ENCODE measurements at regions of chr6 and their contacts with region 1.

Region 1: DNA sequence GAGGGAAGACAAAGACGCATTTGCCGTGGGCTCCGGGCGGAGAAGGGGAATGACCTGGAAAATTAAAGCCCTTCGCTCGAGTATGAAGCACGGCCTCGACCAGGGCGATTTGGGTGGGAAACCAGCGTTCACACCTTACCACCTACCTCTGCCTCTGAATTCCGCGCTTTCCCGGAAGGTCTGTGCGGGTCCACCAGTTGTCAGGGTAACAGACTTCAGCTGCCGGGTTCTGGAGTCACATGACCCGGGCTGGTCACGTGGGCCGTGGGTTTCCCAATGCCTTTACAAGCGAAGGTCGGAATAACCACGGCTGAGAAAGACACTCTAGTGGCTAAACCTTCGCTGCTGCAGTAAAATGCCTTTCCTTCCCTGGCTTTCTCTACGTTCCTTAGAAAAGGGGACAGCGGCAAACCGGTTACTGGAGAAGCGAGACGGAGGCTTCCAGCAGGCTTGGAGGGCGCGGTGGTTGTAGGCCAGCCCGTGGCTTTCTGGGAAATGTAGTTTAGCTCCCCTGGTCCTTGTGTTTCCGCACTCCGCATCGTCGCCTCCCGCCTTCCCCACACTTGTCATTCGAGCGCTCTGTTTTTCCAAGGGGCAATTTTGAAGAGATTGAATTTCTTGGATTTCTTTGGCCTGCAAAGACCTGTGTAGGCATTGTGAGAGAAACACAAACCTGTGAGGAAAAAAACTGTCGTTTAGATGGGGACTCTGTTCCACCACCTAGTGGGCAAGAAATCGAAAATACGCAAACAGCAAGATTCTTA is at the start of gene CEP162:
- DNase-seq: peak; percentile 73 to 84 (median 81)
- H3K4me3 ChIP-seq: peak within 1 kb of the TSS; percentile 90 to 97 (median 95)
- H3K4me3 Mint-ChIP-seq: peak within 1 kb of the TSS; percentile 89 to 99
- H3K27ac ChIP-seq: peak within 1 kb of the TSS; percentile 45 to 89
- H3K27ac Mint-ChIP-seq: peak within 1 kb of the TSS; percentile 89 to 98 (median 94)
- H3K4me1 ChIP-seq: peaks cover 11 to 15% of the 10 kb centered on the region in 2 donors
- H3K4me1 Mint-ChIP-seq: peaks cover 31% of the 10 kb centered on the region
- H3K27me3 ChIP-seq: peaks cover 5 to 36% of the 10 kb centered on the region in 2 donors
- H3K27me3 Mint-ChIP-seq: peaks cover 14 to 16% (median 15%) of the 10 kb centered on the region in 3 donors
- CTCF ChIP-seq: peak; percentile 90
- polyA plus RNA-seq, gene CEP162: 1.5 to 2.7 (median 1.6) TPM

Region 2: DNA sequence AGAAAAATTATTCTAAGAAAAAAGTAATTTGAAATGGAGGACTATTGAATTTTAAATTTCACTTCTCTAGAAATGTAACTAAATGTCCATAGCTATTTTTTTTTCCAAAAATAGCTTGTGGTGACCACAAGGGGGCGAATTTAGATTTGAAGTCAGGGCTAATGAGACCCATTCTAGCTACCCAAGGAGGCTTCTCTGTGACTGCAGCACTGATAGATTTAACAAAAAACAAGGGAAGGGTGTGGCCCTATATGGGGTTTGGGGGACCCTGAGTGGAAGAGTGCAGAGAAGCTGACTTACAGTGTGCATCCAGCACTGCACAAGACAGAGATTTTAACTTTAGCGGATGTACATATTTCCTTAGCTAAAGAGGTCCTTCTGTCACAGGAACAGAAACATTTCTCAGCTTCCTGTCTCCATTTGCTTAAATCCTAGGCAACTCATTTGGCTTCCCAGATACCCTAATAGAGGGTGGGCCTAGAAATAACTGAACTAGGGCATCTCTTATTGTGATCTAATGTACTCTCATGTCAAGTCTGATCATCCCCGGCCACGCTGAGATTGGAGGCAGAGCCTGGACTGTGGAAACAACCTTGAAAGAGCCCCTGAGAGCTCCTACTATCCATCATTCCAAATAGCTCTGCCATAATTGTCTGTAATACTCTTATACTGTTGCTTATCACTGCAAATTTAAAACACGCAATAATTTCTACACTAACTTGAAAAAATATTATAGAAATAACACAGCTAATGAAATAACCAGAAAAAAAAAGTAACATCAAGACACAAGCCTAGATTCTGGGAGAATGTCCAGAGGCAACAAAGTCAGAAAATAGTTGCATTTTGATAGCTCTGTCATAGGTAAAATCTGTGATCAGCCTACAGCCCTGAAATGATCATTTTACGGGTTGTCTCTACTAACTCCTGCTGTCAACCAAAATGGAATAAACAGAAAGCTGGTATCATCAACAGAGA is 612.3 kb before region 1 on chr6:
- intact Hi-C with region 1: loop called in 1 of 2 experiments (anchors 10 kb)
- DNase-seq: peak; percentile 7 to 22 (median 8)
- H3K4me3 ChIP-seq: no peak overlapping the region
- H3K4me3 Mint-ChIP-seq: no peak overlapping the region
- H3K27ac ChIP-seq: no peak overlapping the region
- H3K27ac Mint-ChIP-seq: no peak overlapping the region
- H3K4me1 ChIP-seq: no peaks in the 10 kb centered on the region
- H3K4me1 Mint-ChIP-seq: no peaks in the 10 kb centered on the region
- H3K27me3 ChIP-seq: no peaks in the 10 kb centered on the region
- H3K27me3 Mint-ChIP-seq: peaks cover 2 to 6% (median 5%) of the 10 kb centered on the region in 3 donors
- CTCF ChIP-seq: peak; percentile 78

Region 3: DNA sequence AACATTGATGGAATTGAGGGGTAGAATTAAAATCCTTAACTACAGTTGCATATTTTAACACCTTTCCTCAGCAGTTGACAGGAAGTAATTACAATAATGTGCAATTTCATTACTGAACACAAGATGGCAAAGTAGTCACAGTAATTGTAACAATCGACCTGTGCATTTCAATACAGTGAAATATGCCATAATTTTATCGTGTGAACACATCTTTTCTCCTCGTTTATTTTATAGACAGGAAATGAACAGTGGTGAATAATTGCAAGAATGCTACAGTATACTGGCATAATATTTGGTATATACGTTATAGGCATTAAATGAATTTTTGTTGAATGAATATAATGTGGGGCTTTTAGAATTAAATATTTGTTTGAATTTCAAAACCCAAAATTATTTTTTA is 343.1 kb before region 1 on chr6:
- intact Hi-C with region 1: loop called (anchors 5 to 10 kb)
- DNase-seq: peak in 2 of 3 donors; percentile 25 to 52
- H3K4me3 ChIP-seq: no peak overlapping the region
- H3K4me3 Mint-ChIP-seq: no peak overlapping the region
- H3K27ac ChIP-seq: no peak overlapping the region
- H3K27ac Mint-ChIP-seq: no peak overlapping the region
- H3K4me1 ChIP-seq: no peaks in the 10 kb centered on the region
- H3K4me1 Mint-ChIP-seq: peaks cover 4% of the 10 kb centered on the region
- H3K27me3 ChIP-seq: no peaks in the 10 kb centered on the region
- H3K27me3 Mint-ChIP-seq: no peaks in the 10 kb centered on the region
- CTCF ChIP-seq: peak; percentile 75

Region 4: GRCh38 chr6:84508981-84509380 is 281.4 kb after region 1 on chr6:
- intact Hi-C with region 1: no loop called
- DNase-seq: no peak
- H3K4me3 ChIP-seq: no peak overlapping the region
- H3K4me3 Mint-ChIP-seq: no peak overlapping the region
- H3K27ac ChIP-seq: no peak overlapping the region
- H3K27ac Mint-ChIP-seq: no peak overlapping the region
- H3K4me1 ChIP-seq: no peaks in the 10 kb centered on the region
- H3K4me1 Mint-ChIP-seq: no peaks in the 10 kb centered on the region
- H3K27me3 ChIP-seq: no peaks in the 10 kb centered on the region
- H3K27me3 Mint-ChIP-seq: no peaks in the 10 kb centered on the region
- CTCF ChIP-seq: no peak

Measured in CD14-positive monocyte (primary cell).